Mammary epithelial cell (primary cell): ENCODE measurements at regions of chr19 and their contacts with region 1.

Region 1: DNA sequence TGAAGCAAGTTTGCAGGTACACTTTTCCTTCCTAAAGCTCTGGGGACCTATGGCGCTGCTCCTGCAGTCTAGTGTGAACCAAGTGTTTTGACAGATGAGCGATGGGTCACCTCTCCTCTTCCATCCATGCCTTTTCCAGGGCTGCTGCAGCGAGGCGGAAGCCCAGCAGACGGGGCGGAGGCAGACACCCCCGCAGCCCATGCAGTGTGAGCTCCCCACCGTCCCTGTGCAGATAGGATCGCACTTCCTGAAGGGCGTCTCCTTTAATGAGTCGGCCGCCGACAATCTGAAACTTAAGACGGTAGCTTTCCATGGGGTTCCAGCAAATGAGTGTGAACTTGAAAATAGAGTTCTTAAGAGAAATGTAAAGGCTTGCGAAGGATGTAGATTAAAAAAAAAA is 37.1 kb upstream of the GPI start:
- DNase-seq: no peak
- H3K4me3 ChIP-seq: no peak overlapping the region
- H3K27ac ChIP-seq: no peak overlapping the region
- H3K4me1 ChIP-seq: no peaks in the 10 kb centered on the region
- H3K27me3 ChIP-seq: no peaks in the 10 kb centered on the region
- CTCF ChIP-seq: no peak

Region 2: GRCh38 chr19:34244611-34245299 is 83.1 kb before region 1 on chr19:
- CTCF ChIA-PET with region 1: no interaction called
- dilution Hi-C with region 1: loop called (anchors 5 kb)
- in situ Hi-C with region 1: loop called in 1 of 2 experiments (anchors 10 kb)
- intact Hi-C with region 1: no loop called
- DNase-seq: no peak
- H3K4me3 ChIP-seq: no peak overlapping the region
- H3K27ac ChIP-seq: no peak overlapping the region
- H3K4me1 ChIP-seq: no peaks in the 10 kb centered on the region
- H3K27me3 ChIP-seq: no peaks in the 10 kb centered on the region
- CTCF ChIP-seq: no peak

Region 3: GRCh38 chr19:34288381-34288780 is 39.5 kb before region 1 on chr19:
- CTCF ChIA-PET with region 1: no interaction called
- dilution Hi-C with region 1: loop called (anchors 5 kb)
- in situ Hi-C with region 1: no loop called
- intact Hi-C with region 1: no loop called
- DNase-seq: no peak
- H3K4me3 ChIP-seq: no peak overlapping the region
- H3K27ac ChIP-seq: no peak overlapping the region
- H3K4me1 ChIP-seq: no peaks in the 10 kb centered on the region
- H3K27me3 ChIP-seq: no peaks in the 10 kb centered on the region
- CTCF ChIP-seq: no peak

Region 4: GRCh38 chr19:34345947-34346351 is 18.1 kb after region 1 on chr19:
- CTCF ChIA-PET with region 1: interaction called, 13 read pairs
- dilution Hi-C with region 1: no loop called
- in situ Hi-C with region 1: no loop called
- intact Hi-C with region 1: no loop called
- DNase-seq: peak; percentile 60
- H3K4me3 ChIP-seq: no peak overlapping the region
- H3K27ac ChIP-seq: no peak overlapping the region
- H3K4me1 ChIP-seq: no peaks in the 10 kb centered on the region
- H3K27me3 ChIP-seq: no peaks in the 10 kb centered on the region
- CTCF ChIP-seq: peak; percentile 82 to 83